MCF 10A (cell line): ENCODE measurements at regions of chr20 and their contacts with region 1.

Region 1: GRCh38 chr20:55649254-55649653 is 356.1 kb downstream of the CBLN4 start:
- DNase-seq: no peak
- H3K4me3 Mint-ChIP-seq: no peak overlapping the region
- H3K27ac Mint-ChIP-seq: no peak overlapping the region
- H3K4me1 Mint-ChIP-seq: no peaks in the 10 kb centered on the region
- H3K27me3 Mint-ChIP-seq: no peaks in the 10 kb centered on the region
- CTCF ChIP-seq: no peak

Region 2: DNA sequence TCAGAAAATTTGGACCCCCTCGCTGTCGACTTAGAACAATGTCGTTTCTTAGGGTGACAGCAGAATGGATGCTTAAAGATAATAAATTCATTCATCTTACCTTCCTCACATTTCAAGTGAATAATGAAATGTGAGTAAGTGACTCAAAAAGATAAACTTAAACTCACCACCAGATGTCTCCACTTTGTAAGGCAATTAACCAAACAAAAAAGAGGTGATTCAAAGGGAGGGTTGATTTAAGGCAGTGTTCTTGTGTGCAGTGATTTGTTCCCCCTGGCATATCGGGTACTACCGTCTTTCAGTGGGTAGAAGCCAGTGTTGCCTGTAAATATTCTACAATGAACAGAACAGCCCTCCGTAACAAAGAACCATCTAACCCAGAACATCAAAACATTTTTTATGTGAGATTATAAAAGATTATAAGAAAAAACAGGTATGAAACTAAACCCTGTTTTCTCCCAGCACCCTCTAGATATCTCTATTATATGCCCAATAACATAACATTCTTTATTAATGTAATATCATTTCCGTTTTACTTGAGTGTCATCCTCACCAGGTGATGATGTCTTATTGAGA is 233.6 kb before region 1 on chr20:
- CTCF ChIA-PET with region 1: no interaction called
- POLR2A ChIA-PET with region 1: no interaction called
- intact Hi-C with region 1: loop called (anchors 10 kb)
- DNase-seq: peak; percentile 23
- H3K4me3 Mint-ChIP-seq: no peak overlapping the region
- H3K27ac Mint-ChIP-seq: no peak overlapping the region
- H3K4me1 Mint-ChIP-seq: no peaks in the 10 kb centered on the region
- H3K27me3 Mint-ChIP-seq: no peaks in the 10 kb centered on the region
- CTCF ChIP-seq: peak; percentile 20